ENCODE measurements at regions of chr7 and their contacts with region 1.

Region 1: GRCh38 chr7:5822742-5823503 is 41.5 kb upstream of the RNF216 start:
- DNase-seq: peak; percentile 88 to 99 (median 99)
- ATAC-seq: peak; percentile 95
- H3K4me3 ChIP-seq: peak overlapping the region; percentile 95
- H3K4me3 Mint-ChIP-seq: peak overlapping the region; percentile 74 to 94 (median 88)
- H3K27ac ChIP-seq: peak overlapping the region; percentile 86
- H3K27ac Mint-ChIP-seq: peak overlapping the region; percentile 82 to 97 (median 93)
- H3K4me1 ChIP-seq: peaks cover 15% of the 10 kb centered on the region in 2 donors
- H3K4me1 Mint-ChIP-seq: peaks cover 15 to 43% (median 23%) of the 10 kb centered on the region in 7 donors
- H3K27me3 ChIP-seq: no peaks in the 10 kb centered on the region
- H3K27me3 Mint-ChIP-seq: no peaks in the 10 kb centered on the region

Region 2: DNA sequence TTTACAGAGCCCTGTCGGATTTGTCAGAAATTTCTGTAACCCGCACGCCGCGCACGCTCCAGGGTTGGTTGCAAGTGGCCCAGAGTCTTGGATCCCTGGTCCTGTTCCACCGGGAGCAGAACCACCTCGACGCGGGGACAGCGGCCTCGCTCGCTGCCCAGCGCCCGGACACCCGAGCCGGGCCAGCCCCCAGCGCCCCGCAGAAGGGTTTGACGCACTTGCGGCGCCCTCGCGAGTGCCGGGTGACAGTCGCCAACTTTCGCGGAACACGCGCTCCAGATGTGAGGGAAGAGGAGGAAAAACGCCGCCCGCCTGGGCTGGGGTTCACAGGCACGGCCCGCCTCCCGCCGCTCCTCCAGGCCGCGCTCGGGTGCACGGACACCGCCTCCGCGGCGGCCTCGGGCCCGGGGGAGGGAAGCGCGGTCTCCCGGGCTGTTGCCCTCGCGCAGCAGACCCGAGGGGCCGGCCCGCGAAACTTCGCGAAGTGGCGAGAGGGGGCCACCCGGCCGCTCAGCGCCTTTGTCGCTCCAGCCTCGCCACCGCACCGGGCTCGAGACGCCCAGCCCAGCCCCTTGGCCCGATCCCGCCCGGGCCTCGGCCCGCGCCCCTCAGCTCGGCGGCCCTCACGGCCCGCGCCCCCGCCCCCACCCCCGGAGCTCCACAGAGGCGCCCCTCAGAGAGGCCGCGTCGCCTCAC is 42.0 kb before region 1 on chr7:
- CTCF ChIA-PET with region 1: interaction called, 8 read pairs
- POLR2A ChIA-PET with region 1: interaction called, 19 read pairs
- intact Hi-C with region 1: loop called (anchors 1 kb)
- DNase-seq: peak in 7 of 9 donors; percentile 12 to 60 (median 30)
- ATAC-seq: peak; percentile 35
- H3K4me3 ChIP-seq: peak overlapping the region; percentile 66
- H3K4me3 Mint-ChIP-seq: peak overlapping the region; percentile 72 to 92 (median 84)
- H3K27ac ChIP-seq: peak overlapping the region; percentile 92
- H3K27ac Mint-ChIP-seq: peak overlapping the region; percentile 66 to 93 (median 88)
- H3K4me1 ChIP-seq: peaks cover 24 to 25% of the 10 kb centered on the region in 2 donors
- H3K4me1 Mint-ChIP-seq: peaks cover 28 to 47% (median 42%) of the 10 kb centered on the region in 7 donors
- H3K27me3 ChIP-seq: no peaks in the 10 kb centered on the region
- H3K27me3 Mint-ChIP-seq: no peaks in the 10 kb centered on the region

Region 3: DNA sequence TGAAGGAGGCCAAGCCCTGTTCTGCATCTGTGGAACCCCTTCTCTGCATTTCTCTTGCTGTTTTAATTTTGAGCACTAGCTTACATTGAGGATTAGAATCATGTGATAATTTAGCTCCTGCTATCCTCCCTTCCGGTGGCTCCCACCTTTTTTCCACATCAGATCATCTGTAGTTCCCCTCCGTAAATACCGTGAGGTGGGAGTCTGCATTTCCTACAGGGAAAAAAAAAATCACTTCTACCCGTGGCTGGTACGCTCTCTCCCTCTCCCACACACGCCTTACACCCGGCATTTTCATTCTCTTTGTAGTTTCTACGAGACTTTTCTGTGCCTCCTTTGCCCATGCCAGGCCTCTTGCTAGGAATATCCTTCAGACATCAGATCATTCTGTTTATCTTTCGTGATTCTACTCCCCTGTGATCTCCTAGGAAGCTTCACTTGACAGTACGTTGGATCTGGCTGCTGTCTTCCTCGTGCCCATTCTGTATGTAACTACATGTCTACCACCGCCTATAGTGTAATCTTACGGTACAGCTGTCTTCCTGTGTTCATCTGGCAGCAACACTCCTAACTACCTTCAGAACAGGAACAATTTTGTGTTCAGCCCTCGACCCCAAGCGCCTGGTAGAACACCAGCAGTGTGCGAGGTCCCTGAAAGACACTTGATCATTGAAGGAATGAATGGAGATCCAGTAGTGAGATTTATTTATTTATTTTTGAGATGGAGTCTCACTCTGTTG is 16.0 kb after region 1 on chr7:
- CTCF ChIA-PET with region 1: interaction called, 19 read pairs
- POLR2A ChIA-PET with region 1: interaction called, 47 read pairs
- intact Hi-C with region 1: loop called in 1 of 2 experiments (anchors 1 kb)
- DNase-seq: peak in 2 of 9 donors; percentile 16 to 27
- ATAC-seq: no peak
- H3K4me3 ChIP-seq: no peak overlapping the region
- H3K4me3 Mint-ChIP-seq: peak overlapping the region in 9 of 10 donors; percentile 45 to 82 (median 75)
- H3K27ac ChIP-seq: peak overlapping the region; percentile 52
- H3K27ac Mint-ChIP-seq: peak overlapping the region in 8 of 9 donors; percentile 77 to 95 (median 86)
- H3K4me1 ChIP-seq: peaks cover 12 to 38% of the 10 kb centered on the region in 2 donors
- H3K4me1 Mint-ChIP-seq: peaks cover 14 to 49% (median 31%) of the 10 kb centered on the region in 7 donors
- H3K27me3 ChIP-seq: no peaks in the 10 kb centered on the region
- H3K27me3 Mint-ChIP-seq: no peaks in the 10 kb centered on the region